Heart right ventricle (tissue), 16 donors: ENCODE measurements at regions of chr1 and their contacts with region 1.

Region 1: GRCh38 chr1:178739285-178740045 is 14.4 kb downstream of the RALGPS2 start:
- DNase-seq: no peak
- ATAC-seq: peak in 1 of 8 donors; percentile 57
- H3K4me3 ChIP-seq: no peak overlapping the region
- H3K27ac ChIP-seq: no peak overlapping the region
- H3K4me1 ChIP-seq: peaks cover 0 to 8% (median 0%) of the 10 kb centered on the region in 9 donors
- H3K27me3 ChIP-seq: no peaks in the 10 kb centered on the region
- CTCF ChIP-seq: no peak

Region 2: GRCh38 chr1:178664278-178664677 is 75.2 kb before region 1 on chr1:
- intact Hi-C with region 1: no loop called
- DNase-seq: no peak
- ATAC-seq: no peak
- H3K4me3 ChIP-seq: no peak overlapping the region
- H3K27ac ChIP-seq: no peak overlapping the region
- H3K4me1 ChIP-seq: peaks cover 0 to 6% (median 0%) of the 10 kb centered on the region in 9 donors
- H3K27me3 ChIP-seq: peaks cover 0 to 4% (median 0%) of the 10 kb centered on the region in 7 donors
- CTCF ChIP-seq: no peak

Region 3: DNA sequence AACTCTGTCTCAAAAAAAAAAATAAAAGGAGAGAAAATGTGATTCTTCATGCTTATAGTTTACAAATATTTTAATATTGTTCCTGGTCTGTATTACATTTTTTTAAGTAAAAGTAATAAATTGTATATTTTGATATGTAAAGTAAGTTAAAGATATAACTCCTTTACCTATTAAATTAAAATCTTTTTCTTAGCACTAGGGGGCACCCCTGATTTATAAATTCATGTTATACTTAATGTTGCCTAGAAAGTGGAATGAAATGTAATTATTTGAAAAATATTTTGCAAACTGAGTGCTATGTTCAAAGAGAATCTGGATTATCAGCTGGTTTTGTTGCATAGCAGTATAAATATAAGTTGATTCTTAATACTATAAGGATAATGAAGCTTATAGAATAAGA is 34.8 kb after region 1 on chr1:
- intact Hi-C with region 1: loop called in 1 of 10 experiments (anchors 2 kb)
- DNase-seq: no peak
- ATAC-seq: no peak
- H3K4me3 ChIP-seq: no peak overlapping the region
- H3K27ac ChIP-seq: no peak overlapping the region
- H3K4me1 ChIP-seq: no peaks in the 10 kb centered on the region
- H3K27me3 ChIP-seq: no peaks in the 10 kb centered on the region
- CTCF ChIP-seq: peak in 8 of 9 donors; percentile 13 to 65 (median 50)

Region 4: GRCh38 chr1:178798232-178798861 is 58.9 kb after region 1 on chr1:
- intact Hi-C with region 1: no loop called
- DNase-seq: no peak
- ATAC-seq: no peak
- H3K4me3 ChIP-seq: no peak overlapping the region
- H3K27ac ChIP-seq: no peak overlapping the region
- H3K4me1 ChIP-seq: no peaks in the 10 kb centered on the region
- H3K27me3 ChIP-seq: no peaks in the 10 kb centered on the region
- CTCF ChIP-seq: no peak

Region 5: GRCh38 chr1:178818416-178818815 is 79.0 kb after region 1 on chr1:
- intact Hi-C with region 1: no loop called
- DNase-seq: no peak
- ATAC-seq: no peak
- H3K4me3 ChIP-seq: no peak overlapping the region
- H3K27ac ChIP-seq: no peak overlapping the region
- H3K4me1 ChIP-seq: peaks cover 0 to 4% (median 0%) of the 10 kb centered on the region in 9 donors
- H3K27me3 ChIP-seq: no peaks in the 10 kb centered on the region
- CTCF ChIP-seq: no peak